Endothelial cell of umbilical vein (primary cell): ENCODE measurements at regions of chr5 and their contacts with region 1.

Region 1: GRCh38 chr5:78467752-78468357 is 107.4 kb downstream of the SCAMP1 start:
- DNase-seq: peak; percentile 67
- H3K4me3 ChIP-seq: no peak overlapping the region
- H3K27ac ChIP-seq: no peak overlapping the region
- H3K4me1 ChIP-seq: peaks cover 2% of the 10 kb centered on the region
- H3K27me3 ChIP-seq: no peaks in the 10 kb centered on the region
- CTCF ChIP-seq: peak; percentile 50 to 59
- POLR2A ChIP-seq: no peak

Region 2: DNA sequence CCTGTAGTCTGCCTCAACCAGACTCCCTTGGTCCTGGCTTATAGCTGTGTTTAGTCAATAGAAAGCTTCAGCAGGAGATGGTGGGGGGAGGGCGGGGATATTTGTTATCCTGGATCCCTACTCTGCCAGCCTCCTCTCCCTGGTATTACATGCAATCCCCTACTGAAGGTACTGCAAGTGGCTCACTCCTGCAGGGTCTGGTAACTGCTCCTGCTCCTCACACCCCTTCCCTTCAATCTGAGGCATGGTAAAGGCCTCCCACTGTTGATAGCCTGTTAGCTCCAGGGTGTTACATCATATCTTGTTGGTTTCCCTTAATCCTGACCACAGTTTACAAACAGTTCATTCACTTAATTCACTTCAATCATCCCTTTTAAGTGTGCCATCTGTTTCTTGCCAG is 310.9 kb before region 1 on chr5:
- CTCF ChIA-PET with region 1: no interaction called
- POLR2A ChIA-PET with region 1: no interaction called
- dilution Hi-C with region 1: no loop called
- intact Hi-C with region 1: no loop called
- DNase-seq: no peak
- H3K4me3 ChIP-seq: no peak overlapping the region
- H3K27ac ChIP-seq: no peak overlapping the region
- H3K4me1 ChIP-seq: no peaks in the 10 kb centered on the region
- H3K27me3 ChIP-seq: no peaks in the 10 kb centered on the region
- CTCF ChIP-seq: no peak
- POLR2A ChIP-seq: no peak

Region 3: DNA sequence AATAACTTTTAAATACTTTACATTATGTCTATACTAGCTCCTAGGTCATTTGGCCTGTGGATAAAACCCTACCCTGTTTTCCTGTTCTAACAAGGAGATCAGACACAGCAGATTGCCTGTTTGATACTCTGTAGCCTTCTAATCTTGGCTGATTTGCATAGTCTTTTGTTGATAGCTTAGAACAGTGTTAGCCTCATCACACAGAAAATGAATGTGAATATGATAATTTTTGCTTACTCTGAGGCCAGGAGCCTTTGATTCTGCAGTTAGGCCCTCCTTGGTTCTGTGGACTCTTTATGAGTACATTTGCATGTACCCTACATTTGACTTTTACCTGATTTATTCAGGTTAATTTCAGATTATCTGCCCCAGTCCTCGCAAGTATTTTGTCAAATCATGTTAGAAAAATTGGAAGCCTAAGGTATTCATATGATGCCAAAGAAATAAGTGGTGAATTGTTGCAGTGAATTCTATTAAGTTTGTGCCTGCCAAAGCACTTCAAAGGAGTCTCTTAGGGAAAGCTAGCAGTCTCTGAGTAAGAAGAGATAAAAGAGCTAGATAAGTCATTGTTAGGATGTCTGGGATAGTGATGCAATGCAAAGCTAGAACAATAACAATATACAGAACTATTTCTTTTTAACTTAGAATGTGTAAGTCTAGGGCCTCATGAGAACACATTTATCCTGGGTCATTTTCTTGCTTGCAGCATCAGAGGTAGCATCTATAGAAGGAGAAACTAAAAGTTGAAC is 51.0 kb before region 1 on chr5:
- CTCF ChIA-PET with region 1: no interaction called
- POLR2A ChIA-PET with region 1: no interaction called
- dilution Hi-C with region 1: no loop called
- intact Hi-C with region 1: no loop called
- DNase-seq: no peak
- H3K4me3 ChIP-seq: no peak overlapping the region
- H3K27ac ChIP-seq: no peak overlapping the region
- H3K4me1 ChIP-seq: no peaks in the 10 kb centered on the region
- H3K27me3 ChIP-seq: no peaks in the 10 kb centered on the region
- CTCF ChIP-seq: no peak
- POLR2A ChIP-seq: no peak

Region 4: GRCh38 chr5:78483809-78484521 is 16.1 kb after region 1 on chr5:
- CTCF ChIA-PET with region 1: interaction called, 11 read pairs
- POLR2A ChIA-PET with region 1: no interaction called
- dilution Hi-C with region 1: no loop called
- intact Hi-C with region 1: no loop called
- DNase-seq: peak; percentile 80
- H3K4me3 ChIP-seq: no peak overlapping the region
- H3K27ac ChIP-seq: no peak overlapping the region
- H3K4me1 ChIP-seq: peaks cover 14% of the 10 kb centered on the region
- H3K27me3 ChIP-seq: no peaks in the 10 kb centered on the region
- CTCF ChIP-seq: no peak
- POLR2A ChIP-seq: no peak

Region 5: GRCh38 chr5:78547731-78548615 is 80.1 kb after region 1 on chr5:
- CTCF ChIA-PET with region 1: no interaction called
- POLR2A ChIA-PET with region 1: no interaction called
- dilution Hi-C with region 1: no loop called
- intact Hi-C with region 1: no loop called
- DNase-seq: no peak
- H3K4me3 ChIP-seq: no peak overlapping the region
- H3K27ac ChIP-seq: no peak overlapping the region
- H3K4me1 ChIP-seq: no peaks in the 10 kb centered on the region
- H3K27me3 ChIP-seq: no peaks in the 10 kb centered on the region
- CTCF ChIP-seq: no peak
- POLR2A ChIP-seq: no peak

Region 6: DNA sequence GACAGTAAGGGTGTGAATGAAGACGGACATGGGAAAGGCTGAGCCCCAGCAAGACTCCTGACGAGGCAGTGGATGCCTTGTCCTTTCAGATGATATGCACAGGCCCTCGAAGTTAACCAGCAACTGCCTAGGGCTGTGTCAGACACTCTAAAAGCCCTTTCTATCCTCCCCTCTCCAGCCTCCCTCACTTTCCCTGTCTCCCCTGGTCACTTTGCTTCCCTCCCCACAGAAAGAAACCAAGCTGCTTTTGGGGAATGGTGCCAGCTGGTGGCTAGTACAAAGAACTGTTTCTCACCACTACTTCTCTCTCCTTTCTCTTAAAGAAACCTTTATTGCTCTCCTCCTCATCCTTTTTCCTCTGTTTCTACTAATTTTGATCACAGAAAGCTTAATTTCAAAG is 159.3 kb after region 1 on chr5:
- CTCF ChIA-PET with region 1: interaction called, 10 read pairs
- POLR2A ChIA-PET with region 1: no interaction called
- dilution Hi-C with region 1: no loop called
- intact Hi-C with region 1: no loop called
- DNase-seq: peak; percentile 44
- H3K4me3 ChIP-seq: no peak overlapping the region
- H3K27ac ChIP-seq: no peak overlapping the region
- H3K4me1 ChIP-seq: no peaks in the 10 kb centered on the region
- H3K27me3 ChIP-seq: no peaks in the 10 kb centered on the region
- CTCF ChIP-seq: peak; percentile 27 to 54
- POLR2A ChIP-seq: no peak

Region 7: GRCh38 chr5:78779771-78780616 is 312.1 kb after region 1 on chr5:
- CTCF ChIA-PET with region 1: no interaction called
- POLR2A ChIA-PET with region 1: no interaction called
- dilution Hi-C with region 1: no loop called
- intact Hi-C with region 1: no loop called
- DNase-seq: peak; percentile 50
- H3K4me3 ChIP-seq: no peak overlapping the region
- H3K27ac ChIP-seq: peak overlapping the region; percentile 10
- H3K4me1 ChIP-seq: peaks cover 14% of the 10 kb centered on the region
- H3K27me3 ChIP-seq: no peaks in the 10 kb centered on the region
- CTCF ChIP-seq: no peak
- POLR2A ChIP-seq: no peak

Region 8: DNA sequence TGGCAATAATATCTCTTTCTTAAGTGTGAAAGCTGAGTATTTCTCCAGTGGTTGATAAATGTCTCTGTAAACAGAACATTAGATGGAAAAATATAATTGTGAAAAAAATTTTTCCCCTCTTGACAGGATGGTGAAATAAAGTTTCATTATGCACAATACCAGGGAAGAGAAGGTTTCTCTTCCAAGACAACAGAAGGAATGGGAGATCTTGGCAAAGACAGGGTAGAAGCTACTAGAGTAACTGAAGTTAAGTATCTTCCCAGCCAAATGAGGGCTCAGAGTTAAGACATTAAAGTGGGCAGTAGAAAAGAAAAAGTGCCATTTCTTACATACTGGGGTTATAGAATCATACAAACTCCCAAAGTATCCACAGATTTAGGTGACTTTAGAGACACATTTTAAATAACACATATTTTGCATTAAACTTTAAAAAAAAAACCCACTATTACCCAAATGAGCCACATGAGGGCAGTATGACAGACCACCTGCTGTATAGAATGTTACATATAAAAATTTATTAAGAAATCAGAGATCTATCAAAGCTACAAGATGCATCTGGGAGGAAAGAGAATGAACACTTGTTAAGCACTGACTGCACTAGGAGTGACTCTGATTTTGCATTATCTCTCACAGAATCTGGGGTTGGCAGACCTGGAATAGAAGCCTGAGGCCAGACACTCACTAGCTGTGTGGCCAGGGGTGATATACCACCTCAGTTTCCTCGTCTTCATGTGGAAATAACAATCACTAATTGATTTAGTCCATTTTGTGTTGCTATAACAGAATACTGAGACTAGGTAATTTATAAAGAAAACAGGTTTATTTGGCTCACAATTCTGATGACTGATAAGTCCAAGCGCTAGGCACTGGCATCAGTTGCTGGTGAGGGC is 418.7 kb after region 1 on chr5:
- CTCF ChIA-PET with region 1: interaction called, 9 read pairs
- POLR2A ChIA-PET with region 1: no interaction called
- dilution Hi-C with region 1: no loop called
- intact Hi-C with region 1: loop called (anchors 5 kb)
- DNase-seq: peak; percentile 41
- H3K4me3 ChIP-seq: no peak overlapping the region
- H3K27ac ChIP-seq: no peak overlapping the region
- H3K4me1 ChIP-seq: no peaks in the 10 kb centered on the region
- H3K27me3 ChIP-seq: no peaks in the 10 kb centered on the region
- CTCF ChIP-seq: peak; percentile 37 to 51
- POLR2A ChIP-seq: no peak